AG04450 (cell line): ENCODE measurements at regions of chr2 and their contacts with region 1.

Region 1: DNA sequence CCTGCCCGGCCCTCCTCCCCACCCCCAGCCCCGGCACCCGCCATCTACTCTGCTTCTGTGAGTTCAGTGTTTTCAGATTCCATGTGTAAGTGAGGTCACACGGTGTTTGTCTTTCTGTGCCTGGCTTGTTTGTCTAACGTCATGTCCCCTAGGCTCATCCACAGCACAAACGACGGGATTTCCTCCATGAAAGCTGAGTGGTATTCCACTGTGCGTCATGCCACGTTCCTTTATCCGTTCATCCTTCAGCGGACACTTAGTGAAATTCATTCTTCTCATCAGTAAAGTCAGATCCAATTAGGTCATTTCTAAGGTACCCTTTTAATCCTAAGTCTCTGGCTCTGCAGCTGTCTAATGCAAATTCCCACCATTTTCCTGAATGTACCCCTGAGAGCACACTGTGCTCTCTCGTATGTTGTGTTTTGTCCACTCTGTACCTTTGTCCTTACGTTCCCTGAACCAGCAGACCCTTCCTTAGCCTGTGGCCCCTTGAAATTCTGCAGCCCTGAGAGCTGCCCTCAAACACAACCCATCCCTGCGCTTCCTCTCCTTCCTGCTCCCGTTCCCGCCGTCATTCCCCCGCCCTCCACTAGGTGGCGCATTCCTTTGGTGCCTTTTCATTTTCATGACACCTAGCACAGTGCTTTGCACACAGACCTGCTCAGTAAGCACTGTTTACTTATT is 44.1 kb downstream of the TRAPPC12 start:
- DNase-seq: no peak
- H3K4me3 ChIP-seq: no peak overlapping the region
- H3K27ac ChIP-seq: no peak overlapping the region
- H3K27me3 ChIP-seq: no peaks in the 10 kb centered on the region
- CTCF ChIP-seq: peak; percentile 98

Region 2: DNA sequence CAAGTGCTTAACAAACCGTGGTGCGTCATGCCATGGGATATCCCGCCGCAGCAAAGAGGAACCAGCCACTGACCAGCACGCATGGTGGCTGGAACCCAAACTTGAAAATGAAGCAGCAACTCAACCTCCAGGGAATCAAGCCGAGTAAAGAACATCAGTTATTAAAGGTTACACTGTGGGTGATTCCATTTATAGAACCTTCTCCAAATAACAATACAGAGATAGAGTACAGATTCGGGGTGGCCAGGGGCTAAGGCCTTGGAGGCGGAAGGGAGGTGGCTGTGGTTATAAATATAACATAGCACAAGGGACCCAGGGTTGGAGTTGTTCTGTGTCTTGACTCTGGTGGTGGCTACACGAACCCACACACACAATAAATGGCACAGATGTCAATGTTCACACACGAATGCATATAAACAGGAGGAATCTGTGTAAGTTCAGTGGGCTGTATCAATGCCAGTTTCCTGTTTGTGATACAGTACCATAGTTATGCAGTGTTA is 169.1 kb before region 1 on chr2:
- CTCF ChIA-PET with region 1: no interaction called
- POLR2A ChIA-PET with region 1: no interaction called
- DNase-seq: no peak
- H3K4me3 ChIP-seq: no peak overlapping the region
- H3K27ac ChIP-seq: no peak overlapping the region
- H3K27me3 ChIP-seq: no peaks in the 10 kb centered on the region
- CTCF ChIP-seq: no peak

Region 3: DNA sequence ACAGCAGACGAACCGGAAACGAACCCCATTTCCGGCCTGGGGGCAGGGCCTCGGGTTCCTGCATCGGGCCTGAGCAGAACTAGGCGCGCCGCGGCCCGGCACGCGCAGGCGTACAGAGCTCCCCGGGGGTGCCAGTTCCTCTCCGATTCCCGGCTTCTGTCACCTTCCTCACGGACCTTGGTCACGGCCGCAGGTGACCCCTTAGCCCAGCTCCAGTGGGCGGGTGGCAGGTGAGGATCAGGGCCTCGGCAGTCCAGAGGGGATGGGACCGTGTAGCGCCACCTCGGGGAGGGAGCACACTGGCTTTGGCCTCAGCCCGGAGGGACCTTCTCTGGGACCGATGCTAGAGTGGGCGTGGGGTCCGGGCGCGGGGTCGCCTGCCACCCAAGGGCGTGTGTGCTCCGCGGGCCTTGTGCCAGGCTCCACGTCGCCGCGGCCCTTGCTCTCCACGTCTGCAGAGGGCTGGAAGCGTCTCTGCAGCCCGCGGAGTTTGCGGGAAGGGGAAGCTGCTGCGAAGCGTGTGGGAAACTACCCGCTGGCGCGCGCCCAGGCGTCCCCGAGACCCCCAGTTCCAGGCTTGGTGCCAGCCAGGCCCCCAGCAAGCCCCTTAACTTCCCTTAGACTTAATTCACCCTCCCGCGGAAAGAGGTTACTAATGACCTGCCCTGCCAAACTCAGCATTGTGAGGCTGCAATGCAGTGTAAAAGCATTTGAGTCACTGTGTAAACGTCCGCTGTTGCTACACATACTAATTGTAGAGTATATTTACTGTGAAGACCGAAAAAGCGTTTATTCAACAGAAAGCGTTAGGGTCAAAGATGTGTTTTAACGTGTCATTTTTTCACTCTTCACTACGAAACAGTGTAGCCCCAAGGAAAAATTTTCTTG is 43.7 kb before region 1 on chr2 and contains the start of gene TRAPPC12:
- CTCF ChIA-PET with region 1: interaction called, 39 read pairs
- POLR2A ChIA-PET with region 1: no interaction called
- DNase-seq: peak; percentile 55
- H3K4me3 ChIP-seq: peak within 1 kb of the TSS; percentile 99
- H3K27ac ChIP-seq: peak within 1 kb of the TSS; percentile 88
- H3K27me3 ChIP-seq: no peaks in the 10 kb centered on the region
- CTCF ChIP-seq: peak; percentile 54
- polyA plus RNA-seq, gene TRAPPC12: 41.7 and 56.0 TPM in 2 replicates

Region 4: GRCh38 chr2:3392216-3392615 is 31.4 kb before region 1 on chr2:
- CTCF ChIA-PET with region 1: interaction called, 39 read pairs
- POLR2A ChIA-PET with region 1: interaction called, 3 read pairs
- DNase-seq: no peak
- H3K4me3 ChIP-seq: no peak overlapping the region
- H3K27ac ChIP-seq: no peak overlapping the region
- H3K27me3 ChIP-seq: no peaks in the 10 kb centered on the region
- CTCF ChIP-seq: no peak

Region 5: GRCh38 chr2:3443506-3444073 is 20.0 kb after region 1 on chr2:
- CTCF ChIA-PET with region 1: interaction called, 66 read pairs
- POLR2A ChIA-PET with region 1: no interaction called
- DNase-seq: no peak
- H3K4me3 ChIP-seq: no peak overlapping the region
- H3K27ac ChIP-seq: no peak overlapping the region
- H3K27me3 ChIP-seq: no peaks in the 10 kb centered on the region
- CTCF ChIP-seq: no peak

Region 6: GRCh38 chr2:3461801-3462492 is 38.3 kb after region 1 on chr2:
- CTCF ChIA-PET with region 1: interaction called, 38 read pairs
- POLR2A ChIA-PET with region 1: no interaction called
- DNase-seq: peak; percentile 20
- H3K4me3 ChIP-seq: no peak overlapping the region
- H3K27ac ChIP-seq: no peak overlapping the region
- H3K27me3 ChIP-seq: no peaks in the 10 kb centered on the region
- CTCF ChIP-seq: peak; percentile 81

Region 7: DNA sequence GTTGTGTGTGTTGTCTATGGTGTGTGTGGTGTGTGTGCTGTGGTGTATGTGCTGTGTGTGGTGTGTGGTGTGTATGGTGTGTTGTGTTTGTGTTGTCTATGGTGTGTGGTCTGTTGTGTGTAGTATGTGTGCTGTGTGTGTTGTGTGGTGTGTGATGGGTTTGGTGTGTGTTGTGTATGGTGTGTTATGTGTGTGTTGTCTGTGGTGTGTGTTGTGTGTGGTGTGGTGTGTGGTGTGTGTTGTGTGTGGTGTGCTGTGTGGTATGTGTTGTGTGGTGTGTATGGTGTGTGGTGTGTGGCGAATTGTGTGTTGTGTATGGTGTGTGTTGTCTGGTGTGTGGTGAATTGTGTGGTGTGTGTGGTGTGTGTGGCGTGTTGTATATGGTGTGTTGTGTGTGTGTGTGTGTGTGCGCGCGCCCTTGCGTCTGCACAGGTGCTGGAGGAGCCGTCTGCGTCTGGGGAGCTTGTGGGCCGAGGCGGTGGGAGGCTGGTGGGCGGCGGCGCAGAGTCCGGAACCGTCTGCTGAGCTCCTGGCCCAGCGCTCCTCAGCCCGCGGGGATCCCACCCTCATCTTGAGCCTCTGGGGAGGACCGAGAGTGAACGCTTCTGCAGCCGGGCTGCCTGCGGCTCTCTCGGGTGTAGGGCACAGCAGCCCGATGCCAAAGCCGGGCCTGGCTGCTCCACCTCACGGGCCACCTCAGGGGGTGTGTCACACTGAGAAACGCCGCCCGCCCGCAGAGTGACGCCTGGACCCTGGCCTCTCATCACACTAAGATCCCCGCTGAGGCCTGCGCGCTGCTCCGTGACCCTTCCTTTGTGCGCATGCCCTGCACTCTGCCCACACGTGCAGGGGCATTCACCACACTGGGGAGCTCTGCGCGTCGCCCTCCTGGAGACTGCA is 104.5 kb after region 1 on chr2:
- CTCF ChIA-PET with region 1: no interaction called
- POLR2A ChIA-PET with region 1: no interaction called
- DNase-seq: no peak
- H3K4me3 ChIP-seq: no peak overlapping the region
- H3K27ac ChIP-seq: no peak overlapping the region
- H3K27me3 ChIP-seq: no peaks in the 10 kb centered on the region
- CTCF ChIP-seq: no peak

Region 8: GRCh38 chr2:3594493-3595281 is 171.1 kb after region 1 on chr2 and contains the start of gene COLEC11:
- CTCF ChIA-PET with region 1: no interaction called
- POLR2A ChIA-PET with region 1: no interaction called
- DNase-seq: no peak
- H3K4me3 ChIP-seq: peak within 1 kb of the TSS; percentile 31
- H3K27ac ChIP-seq: peak within 1 kb of the TSS; percentile 24
- H3K27me3 ChIP-seq: no peaks in the 10 kb centered on the region
- CTCF ChIP-seq: peak; percentile 28; the same call in 1 of the 2 replicates
- polyA plus RNA-seq, gene COLEC11: 0.68 and 0.73 TPM in 2 replicates